Left cardiac atrium (tissue), 4 donors: ENCODE measurements at regions of chr12 and their contacts with region 1.

Region 1: GRCh38 chr12:124369055-124369900 is 74.4 kb downstream of the RFLNA start:
- DNase-seq: peak; percentile 93
- ATAC-seq: peak; percentile 87 to 89

Region 2: DNA sequence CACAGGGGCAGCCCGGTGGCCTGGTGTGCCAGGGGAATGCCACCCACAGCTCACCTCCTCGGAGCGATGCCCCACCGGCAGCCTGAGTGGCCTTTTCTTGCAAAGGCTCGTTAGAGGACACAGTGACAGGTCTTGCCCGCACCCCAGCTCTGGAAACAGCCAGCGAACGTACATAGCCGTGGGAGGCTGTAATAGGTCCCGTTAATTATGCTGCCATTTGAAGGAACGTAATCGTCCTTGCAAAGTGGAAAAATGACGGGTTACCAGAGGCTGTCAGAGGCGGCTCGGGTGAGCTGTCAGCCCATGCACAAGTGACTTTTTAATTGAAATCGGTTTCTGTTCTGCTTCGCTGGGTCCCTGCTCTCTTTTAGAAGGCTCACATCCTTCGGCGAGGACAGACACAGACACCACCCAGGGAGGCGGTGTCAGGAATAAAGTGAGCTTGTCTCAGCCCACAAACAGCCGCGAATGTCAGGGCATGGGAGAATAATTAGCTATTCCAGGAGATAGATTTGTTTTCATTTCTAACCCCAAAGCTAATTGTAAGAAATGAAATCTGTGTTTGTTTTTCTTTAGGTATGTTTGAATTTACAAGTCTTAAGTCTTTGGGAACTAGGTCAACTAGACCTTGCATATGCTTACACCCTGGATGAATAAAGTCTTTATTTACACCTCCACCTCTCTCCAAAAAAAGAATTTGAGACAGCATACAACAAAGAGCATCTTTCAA is 151.6 kb before region 1 on chr12:
- intact Hi-C with region 1: no loop called
- DNase-seq: no peak
- ATAC-seq: no peak

Region 3: GRCh38 chr12:124422570-124423523 is 53.6 kb after region 1 on chr12:
- intact Hi-C with region 1: loop called in 1 of 2 experiments (anchors 10 kb)
- DNase-seq: peak; percentile 96
- ATAC-seq: peak; percentile 78 to 88

Region 4: GRCh38 chr12:124453419-124454351 is 84.4 kb after region 1 on chr12:
- intact Hi-C with region 1: loop called in 1 of 2 experiments (anchors 10 kb)
- DNase-seq: peak; percentile 92
- ATAC-seq: peak; percentile 74 to 77

Region 5: DNA sequence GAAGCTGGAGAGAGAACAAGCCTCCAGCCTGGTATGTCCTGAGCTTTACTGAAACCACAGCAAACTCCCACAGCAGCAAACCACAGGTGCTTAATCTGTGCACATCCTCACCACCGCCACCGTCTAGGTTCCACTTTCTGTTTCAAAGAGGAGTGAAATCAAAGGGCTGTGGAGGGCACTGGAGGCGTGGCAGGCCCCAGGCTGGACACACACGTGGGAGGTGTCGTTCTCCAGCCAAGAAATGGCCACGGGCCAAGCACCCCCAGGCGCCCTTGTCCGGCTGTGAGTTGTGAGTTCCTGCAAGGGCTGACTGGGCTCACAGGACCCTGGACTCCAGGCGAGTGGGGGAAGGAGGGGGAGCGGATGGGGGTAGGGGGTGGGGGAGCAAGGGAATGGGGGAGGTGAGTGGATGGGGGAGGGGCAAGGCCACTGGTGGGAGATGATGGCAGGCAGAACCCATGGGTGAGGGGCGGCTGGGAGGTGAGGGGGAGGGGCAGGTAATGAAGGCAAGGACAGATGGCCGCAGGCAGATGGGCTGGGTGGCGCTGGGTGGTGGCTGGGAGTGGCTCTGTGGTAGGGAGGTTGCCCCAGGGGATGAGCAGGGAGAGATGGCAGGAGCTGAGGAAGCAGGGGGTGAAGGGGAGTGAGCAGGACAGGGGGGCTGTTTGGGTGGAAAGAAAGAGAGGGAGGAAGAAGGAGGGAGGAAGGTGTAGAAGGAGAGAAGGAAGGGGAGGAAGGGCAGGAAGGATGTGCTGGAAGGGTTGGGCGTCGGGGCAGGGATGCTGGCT is 111.4 kb after region 1 on chr12:
- intact Hi-C with region 1: no loop called
- DNase-seq: peak; percentile 66
- ATAC-seq: peak; percentile 29 to 70

Region 6: GRCh38 chr12:124506145-124506831 is 137.0 kb after region 1 on chr12:
- intact Hi-C with region 1: no loop called
- DNase-seq: peak; percentile 92
- ATAC-seq: peak; percentile 48 to 68

Region 7: DNA sequence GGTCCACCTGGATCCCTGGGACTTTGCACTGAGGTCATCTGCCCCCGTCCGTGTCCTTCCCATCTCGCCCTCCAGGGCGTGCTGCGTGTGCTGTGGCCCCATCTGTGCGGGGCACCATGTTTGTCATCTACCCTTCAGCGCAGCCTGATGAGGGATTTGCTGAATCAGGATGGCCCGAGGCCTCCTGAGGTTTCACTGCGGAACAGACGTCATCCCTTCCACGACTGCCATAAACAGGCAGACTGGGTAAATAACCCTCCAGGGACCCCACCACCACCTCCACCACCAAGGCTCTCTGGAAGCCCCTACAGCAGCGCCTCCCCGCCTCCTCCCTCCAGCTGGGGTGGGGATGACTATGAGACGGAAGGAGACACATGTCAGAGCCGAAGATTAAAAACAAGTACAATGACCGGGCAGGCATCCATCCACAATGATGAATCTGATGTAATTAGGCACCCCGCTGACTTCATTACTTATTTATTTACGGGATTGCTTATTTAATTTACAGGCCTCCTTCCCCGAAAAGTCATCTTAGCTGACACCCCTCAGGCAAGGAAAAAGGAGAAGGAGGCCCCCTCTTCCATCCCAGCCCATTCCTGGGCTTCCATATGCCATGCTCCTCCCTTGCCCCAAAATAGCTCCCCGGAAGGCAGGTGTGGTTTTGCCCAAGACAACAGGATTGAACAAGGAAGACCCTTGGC is 158.7 kb after region 1 on chr12:
- intact Hi-C with region 1: no loop called
- DNase-seq: no peak
- ATAC-seq: peak in 1 of 2 donors; percentile 4